ENCODE measurements at regions of chr4 and their contacts with region 1.

Region 1: DNA sequence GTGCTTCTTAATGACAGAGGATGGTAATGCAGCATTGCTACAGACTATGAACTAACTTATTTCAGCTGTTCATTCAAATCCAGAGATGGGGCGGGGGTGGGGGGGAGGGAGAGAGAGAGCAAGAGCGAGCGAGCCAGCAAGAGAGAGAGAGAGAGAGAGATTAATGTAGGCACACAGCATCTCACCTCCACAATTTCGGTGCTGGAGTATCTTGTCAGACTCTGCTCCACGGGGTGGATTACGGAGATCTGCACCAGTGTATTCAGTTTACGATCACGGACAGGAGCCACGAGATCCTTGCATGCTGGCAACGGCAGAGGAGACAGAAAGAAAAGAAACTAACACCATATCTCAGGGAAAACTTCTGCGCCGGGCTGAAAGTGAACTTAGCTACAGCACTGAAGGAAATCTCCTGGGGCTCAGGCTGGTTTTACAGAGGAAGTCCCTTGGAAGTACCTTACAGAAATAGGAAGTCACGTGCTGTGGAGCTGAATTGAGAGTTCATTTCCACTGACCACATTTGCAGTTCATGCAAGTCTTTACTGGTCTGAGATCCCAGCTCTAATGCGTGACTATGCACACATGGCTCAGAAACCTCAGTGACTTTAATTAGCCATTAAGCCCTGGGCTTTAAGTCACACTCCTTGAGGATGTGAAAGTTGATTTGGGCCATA is 440.9 kb downstream of the INPP4B start:
- DNase-seq: no peak
- H3K4me3 ChIP-seq: no peak overlapping the region
- H3K27ac ChIP-seq: peak overlapping the region; percentile 100
- H3K4me1 ChIP-seq: peaks cover 68% of the 10 kb centered on the region
- H3K27me3 ChIP-seq: no peaks in the 10 kb centered on the region
- CTCF ChIP-seq: no peak

Region 2: DNA sequence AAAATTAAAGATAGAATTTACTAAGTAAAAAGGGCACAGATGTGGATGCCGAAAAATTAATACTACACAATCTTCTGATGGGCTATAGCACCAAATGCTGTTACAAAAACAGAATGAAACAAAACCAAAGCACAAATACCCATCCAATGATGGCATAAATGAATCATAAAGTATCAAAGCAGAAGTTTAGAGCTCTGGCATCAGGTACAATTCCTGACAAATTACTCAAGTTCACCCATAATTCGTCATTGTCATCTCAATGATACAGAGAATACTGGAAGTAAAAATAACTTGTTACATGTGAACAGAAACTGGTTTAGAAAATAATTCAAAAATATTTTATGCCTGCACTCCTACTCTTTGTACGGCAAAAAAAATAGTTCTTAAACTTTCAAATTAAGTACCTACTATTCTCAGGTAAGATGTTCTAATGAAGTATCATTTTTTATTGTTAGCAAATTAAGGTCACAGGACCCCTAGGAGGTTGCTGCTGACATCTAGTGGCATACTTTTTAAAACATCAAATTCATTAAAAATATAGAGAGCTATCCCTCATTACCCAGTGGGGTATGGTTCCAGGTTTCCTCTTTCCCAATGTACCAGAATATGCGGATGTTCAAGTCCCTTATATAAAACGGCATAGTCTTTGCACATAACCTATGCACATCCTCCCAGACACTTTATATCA is 314.8 kb after region 1 on chr4:
- CTCF ChIA-PET with region 1: no interaction called
- POLR2A ChIA-PET with region 1: interaction called, 9 read pairs
- intact Hi-C with region 1: loop called (anchors 2 kb)
- DNase-seq: peak in 1 of 2 experiments; percentile 65
- H3K4me3 ChIP-seq: no peak overlapping the region
- H3K27ac ChIP-seq: peak overlapping the region; percentile 64
- H3K4me1 ChIP-seq: peaks cover 16% of the 10 kb centered on the region
- H3K27me3 ChIP-seq: no peaks in the 10 kb centered on the region
- CTCF ChIP-seq: peak; percentile 63

Measured in PC-9 (cell line).